HCT116 (cell line): ENCODE measurements at regions of chr17 and their contacts with region 1.

Region 1: GRCh38 chr17:55513885-55514591 is 2.8 kb upstream of the SMIM36 start:
- DNase-seq: peak; percentile 70
- ATAC-seq: peak; percentile 96
- H3K4me3 ChIP-seq: no peak overlapping the region
- H3K27ac ChIP-seq: no peak overlapping the region
- H3K4me1 ChIP-seq: 0 out of 4 replicates have a peak, but pooled peaks cover 0 to 4% of the 10 kb centered on the region in 2 experiments
- H3K27me3 ChIP-seq: peaks cover 45% of the 10 kb centered on the region
- CTCF ChIP-seq: peak; percentile 91 to 99 (median 98)
- POLR2A ChIP-seq: no peak
- RAD21 ChIP-seq: peak; percentile 96

Region 2: GRCh38 chr17:55356434-55357328 is 157.4 kb before region 1 on chr17:
- CTCF ChIA-PET with region 1: interaction called, 34 read pairs
- POLR2A ChIA-PET with region 1: no interaction called
- RAD21 ChIA-PET with region 1: interaction called, 4 to 6 read pairs
- intact Hi-C with region 1: loop called (anchors 1 kb)
- DNase-seq: peak; percentile 84
- ATAC-seq: peak; percentile 100
- H3K4me3 ChIP-seq: no peak overlapping the region
- H3K27ac ChIP-seq: no peak overlapping the region
- H3K4me1 ChIP-seq: peaks cover 0 to 4% of the 10 kb centered on the region in 2 experiments; a peak in 1 of 4 replicates
- H3K27me3 ChIP-seq: no peaks in the 10 kb centered on the region
- CTCF ChIP-seq: peak; percentile 74 to 99 (median 93)
- POLR2A ChIP-seq: no peak
- RAD21 ChIP-seq: peak; percentile 83